ENCODE measurements at regions of chr13 and their contacts with region 1.

Region 1: GRCh38 chr13:110949628-110950027 is 34.8 kb upstream of the ANKRD10 start:
- DNase-seq: no peak
- ATAC-seq: no peak
- H3K4me3 ChIP-seq: no peak overlapping the region
- H3K4me3 Mint-ChIP-seq: no peak overlapping the region
- H3K27ac ChIP-seq: no peak overlapping the region
- H3K27ac Mint-ChIP-seq: no peak overlapping the region
- H3K4me1 ChIP-seq: no peaks in the 10 kb centered on the region
- H3K4me1 Mint-ChIP-seq: no peaks in the 10 kb centered on the region
- H3K27me3 ChIP-seq: peaks cover 0 to 5% of the 10 kb centered on the region in 2 experiments
- H3K27me3 Mint-ChIP-seq: peaks cover 6% of the 10 kb centered on the region
- CTCF ChIP-seq: no peak

Region 2: DNA sequence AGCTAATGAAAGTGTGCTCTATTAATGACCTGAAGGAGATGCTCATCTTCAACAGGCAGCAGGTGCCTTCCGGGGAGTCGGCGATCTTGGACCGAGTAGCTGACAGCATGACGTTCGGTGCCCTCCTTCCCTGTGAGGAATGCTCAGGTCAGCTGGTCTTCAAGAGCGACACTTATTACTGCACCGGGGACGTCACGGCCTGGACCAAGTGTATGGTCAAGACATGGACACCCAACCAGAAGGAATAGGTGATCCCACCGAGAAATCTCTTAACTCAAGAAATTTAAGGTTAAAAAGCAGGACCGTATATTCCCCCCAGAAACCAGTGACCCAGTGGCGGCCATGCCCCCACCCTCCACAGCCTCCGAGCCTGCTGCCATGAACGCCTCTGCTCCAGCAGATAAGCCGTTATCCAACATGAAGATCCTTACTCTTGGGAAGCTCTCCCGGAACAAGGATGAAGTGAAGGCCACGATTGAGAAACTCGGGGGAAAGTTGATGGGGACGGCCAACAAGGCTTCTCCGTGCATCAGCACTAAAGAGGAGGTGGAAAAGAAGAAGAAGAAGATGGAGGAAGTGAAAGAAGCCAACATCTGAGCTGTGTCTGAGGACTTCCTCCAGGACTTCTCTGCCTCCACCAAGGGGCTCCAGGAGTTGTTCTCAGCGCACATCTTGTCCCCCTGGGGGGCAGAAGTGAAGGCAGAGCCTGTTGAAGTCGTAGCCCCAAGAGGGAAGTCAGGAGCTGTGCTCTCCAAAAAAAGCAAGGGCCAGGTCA is 11.9 kb before region 1 on chr13:
- CTCF ChIA-PET with region 1: no interaction called
- POLR2A ChIA-PET with region 1: no interaction called
- intact Hi-C with region 1: loop called in 1 of 2 experiments (anchors 1 kb)
- DNase-seq: no peak
- ATAC-seq: no peak
- H3K4me3 ChIP-seq: no peak overlapping the region
- H3K4me3 Mint-ChIP-seq: no peak overlapping the region
- H3K27ac ChIP-seq: no peak overlapping the region
- H3K27ac Mint-ChIP-seq: no peak overlapping the region
- H3K4me1 ChIP-seq: no peaks in the 10 kb centered on the region
- H3K4me1 Mint-ChIP-seq: no peaks in the 10 kb centered on the region
- H3K27me3 ChIP-seq: peaks cover 0 to 3% of the 10 kb centered on the region in 2 experiments
- H3K27me3 Mint-ChIP-seq: peaks cover 20% of the 10 kb centered on the region
- CTCF ChIP-seq: no peak

Region 3: GRCh38 chr13:110989331-110989730 is 39.7 kb after region 1 on chr13:
- CTCF ChIA-PET with region 1: no interaction called
- POLR2A ChIA-PET with region 1: no interaction called
- intact Hi-C with region 1: no loop called
- DNase-seq: no peak
- ATAC-seq: no peak
- H3K4me3 ChIP-seq: no peak overlapping the region
- H3K4me3 Mint-ChIP-seq: no peak overlapping the region
- H3K27ac ChIP-seq: no peak overlapping the region
- H3K27ac Mint-ChIP-seq: no peak overlapping the region
- H3K4me1 ChIP-seq: no peaks in the 10 kb centered on the region
- H3K4me1 Mint-ChIP-seq: no peaks in the 10 kb centered on the region
- H3K27me3 ChIP-seq: peaks cover 8 to 14% of the 10 kb centered on the region in 2 experiments
- H3K27me3 Mint-ChIP-seq: peaks cover 34% of the 10 kb centered on the region
- CTCF ChIP-seq: no peak

Region 4: GRCh38 chr13:112204881-112205327 is 1255.3 kb after region 1 on chr13:
- CTCF ChIA-PET with region 1: no interaction called
- POLR2A ChIA-PET with region 1: no interaction called
- intact Hi-C with region 1: no loop called
- DNase-seq: no peak
- ATAC-seq: no peak
- H3K4me3 ChIP-seq: no peak overlapping the region
- H3K4me3 Mint-ChIP-seq: no peak overlapping the region
- H3K27ac ChIP-seq: no peak overlapping the region
- H3K27ac Mint-ChIP-seq: no peak overlapping the region
- H3K4me1 ChIP-seq: no peaks in the 10 kb centered on the region
- H3K4me1 Mint-ChIP-seq: no peaks in the 10 kb centered on the region
- H3K27me3 ChIP-seq: peaks cover 21 to 22% of the 10 kb centered on the region in 2 experiments
- H3K27me3 Mint-ChIP-seq: peaks cover 66% of the 10 kb centered on the region
- CTCF ChIP-seq: no peak

Measured in CD4-positive, alpha-beta T cell (primary cell).